Activated CD4-positive, alpha-beta memory T cell treated with anti-CD3 and anti-CD28 coated beads for 36 hours (primary cell): ENCODE measurements at regions of chr5 and their contacts with region 1.

Region 1: DNA sequence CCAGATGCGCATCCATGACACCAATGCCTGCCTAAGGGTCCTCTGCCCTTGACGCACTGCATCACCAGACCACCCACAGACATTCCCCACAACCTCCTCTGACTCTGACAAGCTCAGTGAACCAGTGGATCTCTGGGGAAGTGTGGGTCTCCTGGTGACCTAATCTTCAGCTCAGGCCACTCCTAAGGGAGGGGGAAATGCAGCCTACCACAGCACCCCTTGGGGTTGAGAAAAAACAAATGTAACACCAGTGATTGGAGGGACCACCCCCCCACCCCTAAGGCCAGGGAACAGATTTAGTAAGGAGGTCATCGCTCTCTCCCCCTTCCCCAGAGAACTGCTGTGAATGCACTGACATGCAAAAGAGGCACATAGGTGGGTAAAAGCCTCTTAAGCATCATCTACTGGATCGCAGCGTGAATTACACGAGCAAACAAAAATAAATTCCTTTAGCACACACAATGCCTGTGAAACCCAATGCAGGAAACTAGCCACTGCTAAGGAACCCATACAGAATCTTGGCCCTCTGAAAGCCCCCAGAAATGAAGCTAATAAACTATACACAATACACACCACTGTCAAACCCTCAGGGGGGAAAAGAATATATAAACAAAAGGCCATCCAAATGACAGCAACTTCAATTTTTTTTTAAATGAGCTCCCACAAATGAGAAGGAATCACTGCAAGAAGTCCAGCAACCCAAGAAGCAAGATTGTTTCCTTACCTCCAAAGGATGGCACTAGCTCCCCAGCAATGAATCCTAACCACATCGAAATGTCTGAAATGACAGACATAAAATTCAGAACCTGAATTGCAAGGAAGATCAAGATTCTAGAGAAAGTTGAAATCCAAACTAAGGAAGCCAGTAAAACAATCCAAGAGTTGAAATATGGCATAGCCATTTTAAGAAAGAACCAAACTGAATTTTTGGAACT is 513.7 kb upstream of the PTGER4 start:
- DNase-seq: peak; percentile 32
- H3K4me3 Mint-ChIP-seq: no peak overlapping the region
- H3K27ac Mint-ChIP-seq: no peak overlapping the region
- H3K4me1 Mint-ChIP-seq: peaks cover 12% of the 10 kb centered on the region
- H3K27me3 Mint-ChIP-seq: peaks cover 2% of the 10 kb centered on the region

Region 2: DNA sequence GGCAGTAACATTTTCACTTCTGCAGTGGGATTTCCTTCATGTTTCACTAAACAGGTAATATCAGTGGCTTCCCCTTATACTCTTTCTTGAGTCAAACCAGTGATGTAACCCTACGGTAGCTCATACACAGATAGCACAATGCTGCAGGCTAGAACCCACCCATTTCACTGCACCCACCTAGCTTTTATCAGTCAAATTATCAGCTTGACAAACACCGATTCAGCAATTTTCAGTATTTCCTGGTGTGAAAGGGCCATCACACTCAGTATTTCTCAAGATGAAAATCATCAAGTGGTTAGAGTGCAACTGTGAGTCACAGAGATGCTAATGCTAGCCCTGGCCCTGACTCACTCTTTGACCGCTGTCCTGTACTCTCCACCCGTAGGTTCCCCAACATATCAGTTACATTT is 271.4 kb after region 1 on chr5:
- CTCF ChIA-PET with region 1: interaction called, 6 read pairs
- POLR2A ChIA-PET with region 1: no interaction called
- intact Hi-C with region 1: loop called (anchors 2 kb)
- DNase-seq: peak; percentile 58
- H3K4me3 Mint-ChIP-seq: no peak overlapping the region
- H3K27ac Mint-ChIP-seq: peak overlapping the region; percentile 70
- H3K4me1 Mint-ChIP-seq: peaks cover 74% of the 10 kb centered on the region
- H3K27me3 Mint-ChIP-seq: no peaks in the 10 kb centered on the region